Activated B cell treated with CpG ODN at 0.5 μM for 24 hours (primary cell): ENCODE measurements at regions of chr18 and their contacts with region 1.

Region 1: GRCh38 chr18:58661423-58661822 is 9.8 kb upstream of the MALT1 start:
- DNase-seq: no peak
- ATAC-seq: no peak
- H3K4me3 Mint-ChIP-seq: no peak overlapping the region
- H3K27ac Mint-ChIP-seq: peak overlapping the region; percentile 69
- H3K4me1 Mint-ChIP-seq: peaks cover 90% of the 10 kb centered on the region
- H3K27me3 Mint-ChIP-seq: no peaks in the 10 kb centered on the region
- CTCF ChIP-seq: no peak

Region 2: GRCh38 chr18:57666818-57667497 is 994.5 kb before region 1 on chr18:
- CTCF ChIA-PET with region 1: no interaction called
- POLR2A ChIA-PET with region 1: no interaction called
- intact Hi-C with region 1: no loop called
- DNase-seq: no peak
- ATAC-seq: no peak
- H3K4me3 Mint-ChIP-seq: no peak overlapping the region
- H3K27ac Mint-ChIP-seq: peak overlapping the region; percentile 24
- H3K4me1 Mint-ChIP-seq: peaks cover 75% of the 10 kb centered on the region
- H3K27me3 Mint-ChIP-seq: no peaks in the 10 kb centered on the region
- CTCF ChIP-seq: no peak

Region 3: GRCh38 chr18:58529714-58530354 is 131.6 kb before region 1 on chr18:
- CTCF ChIA-PET with region 1: interaction called, 16 read pairs
- POLR2A ChIA-PET with region 1: interaction called, 29 read pairs
- intact Hi-C with region 1: loop called (anchors 1 kb)
- DNase-seq: peak; percentile 54
- ATAC-seq: peak; percentile 82
- H3K4me3 Mint-ChIP-seq: no peak overlapping the region
- H3K27ac Mint-ChIP-seq: no peak overlapping the region
- H3K4me1 Mint-ChIP-seq: peaks cover 44% of the 10 kb centered on the region
- H3K27me3 Mint-ChIP-seq: no peaks in the 10 kb centered on the region
- CTCF ChIP-seq: peak; percentile 83

Region 4: GRCh38 chr18:58541789-58542425 is 119.5 kb before region 1 on chr18:
- CTCF ChIA-PET with region 1: interaction called, 8 read pairs
- POLR2A ChIA-PET with region 1: interaction called, 29 read pairs
- intact Hi-C with region 1: no loop called
- DNase-seq: no peak
- ATAC-seq: peak; percentile 58
- H3K4me3 Mint-ChIP-seq: peak overlapping the region; percentile 55
- H3K27ac Mint-ChIP-seq: peak overlapping the region; percentile 65
- H3K4me1 Mint-ChIP-seq: peaks cover 62% of the 10 kb centered on the region
- H3K27me3 Mint-ChIP-seq: no peaks in the 10 kb centered on the region
- CTCF ChIP-seq: no peak

Region 5: DNA sequence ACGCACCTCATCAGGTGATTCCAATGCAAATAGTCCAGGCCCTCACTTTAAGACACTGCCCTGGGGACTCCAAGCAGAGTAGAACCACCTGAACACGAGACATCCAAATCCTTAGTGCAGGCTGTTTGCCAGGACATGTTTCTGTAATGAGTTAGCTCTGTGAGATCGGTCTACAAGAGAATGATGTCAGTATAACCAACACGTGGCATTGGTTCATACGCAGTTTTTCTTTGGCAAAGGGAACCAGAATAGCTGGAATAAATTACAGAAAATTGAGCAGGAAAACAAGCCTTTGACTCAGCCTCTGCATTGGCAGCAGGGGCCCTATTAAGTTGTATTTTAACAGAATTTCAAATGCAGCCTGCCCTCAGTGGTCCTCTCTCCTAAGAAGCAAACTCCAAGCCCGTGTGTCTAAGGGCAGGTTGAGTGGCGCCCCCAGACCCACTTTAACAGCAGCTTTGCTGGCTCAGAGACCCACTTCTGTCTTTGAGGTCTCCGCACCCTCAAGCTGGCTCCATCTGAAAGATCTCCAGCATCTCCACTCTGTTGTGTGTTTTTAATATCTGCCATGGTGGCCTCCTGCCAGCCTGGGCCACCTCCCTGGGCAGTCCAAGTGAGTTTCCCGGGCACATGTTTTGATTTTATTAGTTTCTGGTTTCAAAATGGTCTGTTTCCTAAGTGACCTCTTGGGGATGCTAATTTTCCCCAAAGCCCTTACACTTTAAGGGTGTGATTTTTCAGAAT is 93.8 kb before region 1 on chr18:
- CTCF ChIA-PET with region 1: interaction called, 3 read pairs
- POLR2A ChIA-PET with region 1: interaction called, 4 read pairs
- intact Hi-C with region 1: loop called (anchors 1 kb)
- DNase-seq: no peak
- ATAC-seq: no peak
- H3K4me3 Mint-ChIP-seq: no peak overlapping the region
- H3K27ac Mint-ChIP-seq: no peak overlapping the region
- H3K4me1 Mint-ChIP-seq: peaks cover 33% of the 10 kb centered on the region
- H3K27me3 Mint-ChIP-seq: no peaks in the 10 kb centered on the region
- CTCF ChIP-seq: no peak

Region 6: DNA sequence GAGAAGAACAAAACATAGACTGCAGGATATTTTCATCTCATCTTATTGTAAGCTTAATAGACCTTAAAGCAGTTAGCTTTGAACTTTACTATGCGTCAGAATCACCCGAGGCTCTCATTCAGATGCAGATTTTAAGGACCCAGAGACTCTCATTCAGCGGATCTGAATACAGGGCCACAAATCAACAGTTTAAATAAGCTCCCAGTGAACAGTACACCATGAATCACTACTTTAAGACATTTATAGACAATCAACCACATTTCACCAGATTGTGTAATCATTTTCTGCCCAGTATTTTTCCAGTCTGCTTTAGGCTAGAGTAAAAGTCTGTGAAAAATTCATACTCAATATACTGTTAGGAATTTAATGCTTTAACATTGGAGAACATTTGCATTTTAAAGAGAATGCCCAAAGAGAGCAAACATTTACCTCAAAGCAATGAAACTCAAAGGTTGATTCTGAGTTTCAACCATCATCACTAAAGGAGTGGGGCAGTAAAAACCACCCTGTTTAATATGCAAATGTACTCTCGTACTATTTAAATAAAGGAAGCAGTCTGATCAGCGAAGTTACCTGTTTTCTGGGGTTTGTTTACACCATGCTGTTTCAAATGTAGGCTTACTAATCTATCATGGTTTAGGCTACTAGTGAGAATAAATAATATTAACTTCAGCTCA is 21.5 kb before region 1 on chr18:
- CTCF ChIA-PET with region 1: no interaction called
- POLR2A ChIA-PET with region 1: interaction called, 19 read pairs
- intact Hi-C with region 1: loop called (anchors 1 kb)
- DNase-seq: no peak
- ATAC-seq: peak; percentile 62
- H3K4me3 Mint-ChIP-seq: peak overlapping the region; percentile 21
- H3K27ac Mint-ChIP-seq: peak overlapping the region; percentile 71
- H3K4me1 Mint-ChIP-seq: peaks cover 22% of the 10 kb centered on the region
- H3K27me3 Mint-ChIP-seq: no peaks in the 10 kb centered on the region
- CTCF ChIP-seq: no peak

Region 7: DNA sequence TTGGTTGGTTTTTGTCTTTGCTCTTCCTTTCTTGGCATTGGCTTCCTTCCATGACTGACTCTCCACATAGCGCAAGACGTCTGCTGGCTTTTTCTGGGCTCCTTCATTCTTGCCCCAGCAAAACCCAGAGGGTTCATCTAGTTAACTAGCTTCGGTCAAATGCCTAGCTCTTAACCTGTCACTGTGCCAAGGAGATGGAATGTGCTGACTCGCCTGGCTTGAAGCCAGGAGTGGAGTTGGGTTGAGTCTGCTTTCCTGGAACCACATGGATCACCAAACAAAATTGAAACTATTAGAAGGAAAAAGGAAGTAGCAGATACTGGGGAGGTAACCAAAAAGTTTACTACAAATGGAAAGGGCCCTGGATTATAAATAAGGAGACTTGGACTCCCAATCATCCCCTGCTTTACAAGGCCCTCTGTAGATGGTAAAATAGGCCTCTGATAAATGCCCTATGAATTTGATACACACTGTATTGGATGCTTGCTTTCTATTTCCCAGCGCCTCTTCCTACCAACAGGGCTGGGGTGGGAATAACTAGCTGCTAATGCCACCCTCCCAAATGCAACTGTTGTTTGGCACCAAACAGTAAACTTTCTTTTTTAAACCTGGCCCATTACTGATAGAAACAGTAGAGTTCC is 21.1 kb after region 1 on chr18:
- CTCF ChIA-PET with region 1: no interaction called
- POLR2A ChIA-PET with region 1: interaction called, 16 read pairs
- intact Hi-C with region 1: no loop called
- DNase-seq: no peak
- ATAC-seq: no peak
- H3K4me3 Mint-ChIP-seq: no peak overlapping the region
- H3K27ac Mint-ChIP-seq: no peak overlapping the region
- H3K4me1 Mint-ChIP-seq: peaks cover 34% of the 10 kb centered on the region
- H3K27me3 Mint-ChIP-seq: no peaks in the 10 kb centered on the region
- CTCF ChIP-seq: no peak

Region 8: GRCh38 chr18:59139371-59140298 is 478.2 kb after region 1 on chr18 and contains the start of gene SEC11C:
- CTCF ChIA-PET with region 1: no interaction called
- POLR2A ChIA-PET with region 1: no interaction called
- intact Hi-C with region 1: loop called (anchors 5 kb)
- DNase-seq: peak; percentile 93
- ATAC-seq: peak; percentile 84
- H3K4me3 Mint-ChIP-seq: peak within 1 kb of the TSS; percentile 95
- H3K27ac Mint-ChIP-seq: peak within 1 kb of the TSS; percentile 100
- H3K4me1 Mint-ChIP-seq: peaks cover 44% of the 10 kb centered on the region
- H3K27me3 Mint-ChIP-seq: peaks cover 8% of the 10 kb centered on the region
- CTCF ChIP-seq: no peak
- total RNA-seq, gene SEC11C: 112 and 126 TPM in 2 replicates